ENCODE measurements at regions of chr11 and their contacts with region 1.

Region 1: GRCh38 chr11:17384002-17384511 is 4.4 kb downstream of the KCNJ11 start:
- DNase-seq: peak; percentile 93
- H3K4me3 ChIP-seq: no peak overlapping the region
- H3K27ac ChIP-seq: no peak overlapping the region
- H3K4me1 ChIP-seq: peaks cover 0 to 24% (median 6%) of the 10 kb centered on the region in 6 donors
- H3K27me3 ChIP-seq: peaks cover 0 to 35% (median 0%) of the 10 kb centered on the region in 7 donors
- CTCF ChIP-seq: peak; percentile 64 to 92 (median 85)
- POLR2A ChIP-seq: no peak

Region 2: GRCh38 chr11:17502630-17503029 is 118.6 kb after region 1 on chr11:
- intact Hi-C with region 1: loop called (anchors 2 kb)
- DNase-seq: no peak
- H3K4me3 ChIP-seq: no peak overlapping the region
- H3K27ac ChIP-seq: no peak overlapping the region
- H3K4me1 ChIP-seq: peaks cover 0 to 2% (median 0%) of the 10 kb centered on the region in 6 donors
- H3K27me3 ChIP-seq: peaks cover 0 to 6% (median 0%) of the 10 kb centered on the region in 7 donors
- CTCF ChIP-seq: no peak
- POLR2A ChIP-seq: no peak

Region 3: GRCh38 chr11:17950644-17951043 is 566.6 kb after region 1 on chr11:
- intact Hi-C with region 1: no loop called
- DNase-seq: no peak
- H3K4me3 ChIP-seq: no peak overlapping the region
- H3K27ac ChIP-seq: no peak overlapping the region
- H3K4me1 ChIP-seq: peaks cover 0 to 6% (median 0%) of the 10 kb centered on the region in 6 donors
- H3K27me3 ChIP-seq: no peaks in the 10 kb centered on the region
- CTCF ChIP-seq: no peak
- POLR2A ChIP-seq: no peak